Caco-2 (cell line): ENCODE measurements at regions of chr2 and their contacts with region 1.

Region 1: GRCh38 chr2:191566344-191566743 is 111.6 kb upstream of the NABP1 start:
- DNase-seq: peak; percentile 89 to 90
- H3K4me3 ChIP-seq: no peak overlapping the region
- H3K4me3 Mint-ChIP-seq: peak overlapping the region; percentile 72
- H3K27ac Mint-ChIP-seq: peak overlapping the region; percentile 92
- H3K4me1 ChIP-seq: peaks cover 59% of the 10 kb centered on the region
- H3K4me1 Mint-ChIP-seq: peaks cover 47% of the 10 kb centered on the region
- H3K27me3 ChIP-seq: no peaks in the 10 kb centered on the region
- H3K27me3 Mint-ChIP-seq: no peaks in the 10 kb centered on the region
- CTCF ChIP-seq: peak; percentile 76 to 86

Region 2: GRCh38 chr2:191436368-191437055 is 129.8 kb before region 1 on chr2:
- CTCF ChIA-PET with region 1: no interaction called
- POLR2A ChIA-PET with region 1: no interaction called
- intact Hi-C with region 1: no loop called
- DNase-seq: no peak
- H3K4me3 ChIP-seq: no peak overlapping the region
- H3K4me3 Mint-ChIP-seq: no peak overlapping the region
- H3K27ac Mint-ChIP-seq: no peak overlapping the region
- H3K4me1 ChIP-seq: peaks cover 6% of the 10 kb centered on the region; the same call in 1 of the 2 replicates
- H3K4me1 Mint-ChIP-seq: peaks cover 8% of the 10 kb centered on the region
- H3K27me3 ChIP-seq: no peaks in the 10 kb centered on the region
- H3K27me3 Mint-ChIP-seq: no peaks in the 10 kb centered on the region
- CTCF ChIP-seq: no peak

Region 3: GRCh38 chr2:191582355-191582754 is 16.0 kb after region 1 on chr2:
- CTCF ChIA-PET with region 1: interaction called, 16 read pairs
- POLR2A ChIA-PET with region 1: no interaction called
- intact Hi-C with region 1: loop called (anchors 1 kb)
- DNase-seq: peak; percentile 79 to 80
- H3K4me3 ChIP-seq: no peak overlapping the region
- H3K4me3 Mint-ChIP-seq: peak overlapping the region; percentile 46
- H3K27ac Mint-ChIP-seq: peak overlapping the region; percentile 97
- H3K4me1 ChIP-seq: peaks cover 45% of the 10 kb centered on the region
- H3K4me1 Mint-ChIP-seq: peaks cover 13% of the 10 kb centered on the region
- H3K27me3 ChIP-seq: no peaks in the 10 kb centered on the region
- H3K27me3 Mint-ChIP-seq: no peaks in the 10 kb centered on the region
- CTCF ChIP-seq: no peak

Region 4: GRCh38 chr2:191637182-191638078 is 71.1 kb after region 1 on chr2:
- CTCF ChIA-PET with region 1: interaction called, 20 read pairs
- POLR2A ChIA-PET with region 1: interaction called, 15 read pairs
- intact Hi-C with region 1: loop called (anchors 1 kb)
- DNase-seq: peak in 1 of 2 experiments; percentile 66
- H3K4me3 ChIP-seq: no peak overlapping the region
- H3K4me3 Mint-ChIP-seq: peak overlapping the region; percentile 66
- H3K27ac Mint-ChIP-seq: peak overlapping the region; percentile 89
- H3K4me1 ChIP-seq: peaks cover 58% of the 10 kb centered on the region
- H3K4me1 Mint-ChIP-seq: peaks cover 57% of the 10 kb centered on the region
- H3K27me3 ChIP-seq: no peaks in the 10 kb centered on the region
- H3K27me3 Mint-ChIP-seq: no peaks in the 10 kb centered on the region
- CTCF ChIP-seq: no peak

Region 5: GRCh38 chr2:191691016-191691735 is 124.8 kb after region 1 on chr2:
- CTCF ChIA-PET with region 1: interaction called, 22 read pairs
- POLR2A ChIA-PET with region 1: interaction called, 10 read pairs
- intact Hi-C with region 1: loop called (anchors 1 kb)
- DNase-seq: peak; percentile 56 to 70
- H3K4me3 ChIP-seq: no peak overlapping the region
- H3K4me3 Mint-ChIP-seq: peak overlapping the region; percentile 52
- H3K27ac Mint-ChIP-seq: peak overlapping the region; percentile 53
- H3K4me1 ChIP-seq: peaks cover 62% of the 10 kb centered on the region
- H3K4me1 Mint-ChIP-seq: peaks cover 44% of the 10 kb centered on the region
- H3K27me3 ChIP-seq: no peaks in the 10 kb centered on the region
- H3K27me3 Mint-ChIP-seq: no peaks in the 10 kb centered on the region
- CTCF ChIP-seq: peak; percentile 72 to 82

Region 6: DNA sequence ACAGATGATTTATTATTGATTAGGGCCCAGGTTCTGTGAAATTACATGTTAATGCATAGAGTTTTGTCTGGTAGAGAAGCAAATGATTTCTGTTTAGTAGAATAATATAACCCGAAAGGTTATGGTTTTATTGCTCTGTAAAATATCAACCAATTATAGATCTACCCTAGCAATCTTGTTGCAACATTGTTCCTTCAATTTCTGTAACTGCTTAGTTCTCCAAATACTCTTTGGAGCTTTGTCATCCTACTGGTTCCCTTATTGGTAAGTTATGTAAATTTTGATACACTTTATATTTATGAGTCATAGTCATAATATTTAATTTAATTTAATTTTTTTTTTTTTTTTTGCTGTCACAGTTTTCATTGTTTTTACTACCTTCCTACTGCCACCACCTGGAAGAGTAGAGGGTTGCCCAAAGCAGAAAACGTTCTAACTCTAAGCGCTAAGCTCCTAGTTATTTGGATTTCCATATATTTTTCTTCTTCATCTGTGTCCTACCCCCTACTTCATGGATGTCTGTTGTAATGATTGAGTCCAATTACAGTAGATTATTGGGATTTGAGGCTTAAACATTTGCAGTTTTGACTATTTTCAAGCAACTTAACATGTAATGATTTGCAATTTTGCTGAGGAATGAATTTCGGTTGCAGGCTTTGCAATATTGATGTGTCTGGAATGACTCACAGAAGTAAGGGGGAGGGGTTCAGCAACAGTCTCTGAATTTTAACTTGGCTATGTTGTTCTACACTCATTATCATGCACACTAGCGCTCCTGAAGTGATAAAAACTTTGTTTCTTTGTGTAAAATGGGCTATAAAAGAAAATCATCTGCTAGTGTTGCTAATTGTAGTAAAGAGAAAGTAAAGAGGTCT is 162.6 kb after region 1 on chr2:
- CTCF ChIA-PET with region 1: no interaction called
- POLR2A ChIA-PET with region 1: no interaction called
- intact Hi-C with region 1: loop called (anchors 1 kb)
- DNase-seq: no peak
- H3K4me3 ChIP-seq: no peak overlapping the region
- H3K4me3 Mint-ChIP-seq: no peak overlapping the region
- H3K27ac Mint-ChIP-seq: no peak overlapping the region
- H3K4me1 ChIP-seq: no peaks in the 10 kb centered on the region
- H3K4me1 Mint-ChIP-seq: no peaks in the 10 kb centered on the region
- H3K27me3 ChIP-seq: no peaks in the 10 kb centered on the region
- H3K27me3 Mint-ChIP-seq: no peaks in the 10 kb centered on the region
- CTCF ChIP-seq: peak in 1 of 2 experiments; percentile 6